Ascending aorta (tissue), 2 donors: ENCODE measurements at regions of chr21 and their contacts with region 1.

Region 1: GRCh38 chr21:33324291-33325221 is at the start of gene IFNAR1:
- DNase-seq: peak; percentile 95 to 99
- H3K4me3 ChIP-seq: peak within 1 kb of the TSS; percentile 81 to 98
- H3K27ac ChIP-seq: peak within 1 kb of the TSS; percentile 94 to 98
- H3K4me1 ChIP-seq: peaks cover 2 to 22% of the 10 kb centered on the region in 2 donors
- H3K27me3 ChIP-seq: no peaks in the 10 kb centered on the region
- CTCF ChIP-seq: no peak
- total RNA-seq, gene IFNAR1: 25.9 TPM

Region 2: DNA sequence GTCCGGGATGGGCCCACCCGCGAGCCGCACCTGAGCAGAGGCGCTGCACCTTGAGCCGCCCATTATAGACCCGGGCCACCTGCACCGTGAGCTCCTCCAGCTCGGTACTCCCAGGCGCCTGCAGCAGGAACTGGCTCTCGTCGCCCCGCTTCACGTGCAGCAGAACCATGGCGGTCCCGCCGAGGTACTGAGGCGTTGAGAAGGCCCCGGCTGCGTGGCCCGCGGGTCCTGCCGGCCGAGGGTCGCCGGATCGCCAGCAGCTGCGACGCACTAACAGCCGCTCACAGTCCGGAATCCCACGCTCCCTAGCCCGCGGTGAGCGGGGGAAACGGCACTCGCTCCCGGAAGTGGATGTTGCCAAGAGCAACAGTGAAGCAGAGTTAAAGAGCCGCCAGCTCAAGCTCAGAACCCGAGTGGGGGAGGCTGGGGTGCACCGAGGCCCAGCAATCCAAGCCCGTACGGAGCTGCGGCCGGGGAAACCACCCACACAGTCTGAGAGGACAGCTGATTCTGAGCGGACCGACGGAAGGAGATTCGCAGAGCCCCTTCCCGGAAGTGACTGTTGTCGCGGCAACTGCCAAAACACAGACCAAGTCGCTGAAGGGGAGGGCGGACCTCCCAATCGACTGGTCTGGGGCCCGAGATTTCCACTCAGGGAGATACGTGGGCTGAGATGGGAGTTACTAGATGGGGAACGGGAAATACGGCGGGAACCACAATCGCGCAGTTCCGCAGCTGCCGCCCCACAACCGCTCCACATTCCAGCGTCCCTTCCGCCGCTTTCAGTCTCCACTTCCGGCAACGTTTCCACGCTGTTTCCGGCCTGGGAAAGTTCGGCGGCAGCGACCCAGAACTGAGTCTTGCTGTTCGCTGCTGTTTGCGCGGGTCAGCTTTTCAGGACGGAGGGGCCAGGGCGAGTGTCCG is 712.2 kb before region 1 on chr21 and contains the start of gene CFAP298:
- intact Hi-C with region 1: loop called (anchors 5 kb)
- DNase-seq: peak; percentile 37 to 93
- H3K4me3 ChIP-seq: peak within 1 kb of the TSS; percentile 73 to 83
- H3K27ac ChIP-seq: peak within 1 kb of the TSS; percentile 83 to 86
- H3K4me1 ChIP-seq: peaks cover 0 to 11% of the 10 kb centered on the region in 2 donors
- H3K27me3 ChIP-seq: no peaks in the 10 kb centered on the region
- CTCF ChIP-seq: no peak
- total RNA-seq, gene CFAP298: 18.3 TPM

Region 3: GRCh38 chr21:33229784-33230544 is 94.6 kb before region 1 on chr21 and contains the start of gene IFNAR2:
- intact Hi-C with region 1: loop called (anchors 2 kb)
- DNase-seq: peak in 1 of 2 donors; percentile 86
- H3K4me3 ChIP-seq: peak within 1 kb of the TSS; percentile 95 to 100
- H3K27ac ChIP-seq: peak within 1 kb of the TSS; percentile 99
- H3K4me1 ChIP-seq: peaks cover 0 to 23% of the 10 kb centered on the region in 2 donors
- H3K27me3 ChIP-seq: no peaks in the 10 kb centered on the region
- CTCF ChIP-seq: no peak
- total RNA-seq, gene IFNAR2: 30.3 TPM

Region 4: GRCh38 chr21:33266050-33266788 is 58.3 kb before region 1 on chr21 and contains the start of gene IL10RB:
- intact Hi-C with region 1: loop called (anchors 1 kb)
- DNase-seq: peak in 1 of 2 donors; percentile 85
- H3K4me3 ChIP-seq: peak within 1 kb of the TSS; percentile 76 to 89
- H3K27ac ChIP-seq: peak within 1 kb of the TSS; percentile 84
- H3K4me1 ChIP-seq: peaks cover 0 to 10% of the 10 kb centered on the region in 2 donors
- H3K27me3 ChIP-seq: no peaks in the 10 kb centered on the region
- CTCF ChIP-seq: no peak
- total RNA-seq, gene IL10RB: 39.1 TPM

Region 5: DNA sequence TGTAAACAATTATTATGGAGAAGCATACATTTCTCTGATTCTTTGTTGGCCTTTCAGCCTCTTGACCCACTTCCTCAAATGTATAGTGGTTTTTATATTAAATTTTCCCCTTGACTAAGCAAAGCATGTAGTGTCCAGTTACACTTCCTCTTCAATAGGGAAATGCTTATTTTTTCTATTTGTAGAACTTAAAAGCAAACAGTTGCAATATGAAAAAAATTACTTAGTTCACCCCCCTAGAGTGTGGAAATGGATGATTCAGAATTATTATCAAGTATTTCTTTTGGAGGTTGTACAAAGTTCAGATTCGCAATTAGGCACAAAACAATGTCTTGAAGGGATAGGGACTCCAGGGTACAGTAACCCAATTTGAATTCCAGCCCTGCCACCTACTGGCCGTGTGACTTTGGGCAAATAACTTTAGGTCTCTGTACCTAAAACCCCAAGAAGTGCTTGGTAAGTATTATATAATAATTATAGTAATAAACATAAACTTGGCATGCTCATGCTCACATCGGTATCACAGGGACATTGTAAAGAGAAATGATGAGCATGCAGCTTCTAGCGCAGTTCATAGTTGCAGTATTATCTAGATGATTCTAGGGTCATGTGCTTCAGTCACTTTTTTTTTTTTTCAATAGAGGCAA is 50.0 kb after region 1 on chr21:
- intact Hi-C with region 1: loop called (anchors 2 kb)
- DNase-seq: no peak
- H3K4me3 ChIP-seq: no peak overlapping the region
- H3K27ac ChIP-seq: no peak overlapping the region
- H3K4me1 ChIP-seq: peaks cover 0 to 7% of the 10 kb centered on the region in 2 donors
- H3K27me3 ChIP-seq: no peaks in the 10 kb centered on the region
- CTCF ChIP-seq: peak; percentile 19 to 51 (median 49)

Region 6: GRCh38 chr21:33403779-33404585 is 79.4 kb after region 1 on chr21:
- intact Hi-C with region 1: loop called (anchors 2 kb)
- DNase-seq: peak in 1 of 2 donors; percentile 84
- H3K4me3 ChIP-seq: peak overlapping the region; percentile 89 to 97
- H3K27ac ChIP-seq: peak overlapping the region; percentile 97 to 99
- H3K4me1 ChIP-seq: peaks cover 0 to 19% of the 10 kb centered on the region in 2 donors
- H3K27me3 ChIP-seq: no peaks in the 10 kb centered on the region
- CTCF ChIP-seq: no peak

Region 7: DNA sequence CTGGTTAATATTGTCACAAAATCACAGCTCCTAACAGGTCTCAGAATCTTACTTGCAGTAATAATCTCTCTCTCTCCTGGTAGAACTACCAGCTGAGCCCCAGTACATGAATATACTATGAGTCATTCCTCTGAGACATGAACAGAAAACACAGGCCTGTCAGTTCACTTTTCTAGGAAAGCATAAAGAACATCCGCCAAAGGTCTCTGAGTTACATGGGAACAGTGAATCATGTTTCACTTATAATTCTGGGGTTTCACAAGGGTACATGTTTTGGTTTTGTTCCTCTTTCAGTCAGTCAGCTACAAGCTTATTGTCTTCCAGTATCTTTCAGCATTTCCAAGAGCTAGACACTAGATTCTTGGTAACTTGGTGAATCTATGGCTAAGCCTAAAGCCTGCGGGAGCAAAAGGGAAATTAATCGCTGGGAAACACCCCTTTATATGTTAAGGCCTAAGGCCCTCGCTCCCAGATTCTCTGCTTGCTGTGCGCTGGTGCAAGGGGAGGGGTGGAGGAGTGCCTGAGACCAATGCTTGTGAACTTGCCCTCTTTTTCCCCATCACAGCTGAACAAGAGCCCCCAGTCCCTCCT is 110.3 kb after region 1 on chr21:
- intact Hi-C with region 1: loop called (anchors 2 kb)
- DNase-seq: no peak
- H3K4me3 ChIP-seq: peak overlapping the region in 1 of 2 donors; percentile 23
- H3K27ac ChIP-seq: peak overlapping the region; percentile 67 to 91
- H3K4me1 ChIP-seq: peaks cover 11 to 18% of the 10 kb centered on the region in 2 donors
- H3K27me3 ChIP-seq: no peaks in the 10 kb centered on the region
- CTCF ChIP-seq: no peak